K562 (cell line): ENCODE measurements at regions of chr4 and their contacts with region 1.

Region 1: GRCh38 chr4:183747931-183748670 is 89.0 kb downstream of the TRAPPC11 start:
- DNase-seq: no peak
- ATAC-seq: no peak
- H3K4me3 ChIP-seq: no peak overlapping the region
- H3K27ac ChIP-seq: no peak overlapping the region
- H3K4me1 ChIP-seq: no peaks in the 10 kb centered on the region
- H3K27me3 ChIP-seq: peaks cover 15 to 19% of the 10 kb centered on the region in 2 experiments
- CTCF ChIP-seq: no peak
- EP300 ChIP-seq: no peak
- POLR2A ChIP-seq: no peak
- RAD21 ChIP-seq: no peak

Region 2: DNA sequence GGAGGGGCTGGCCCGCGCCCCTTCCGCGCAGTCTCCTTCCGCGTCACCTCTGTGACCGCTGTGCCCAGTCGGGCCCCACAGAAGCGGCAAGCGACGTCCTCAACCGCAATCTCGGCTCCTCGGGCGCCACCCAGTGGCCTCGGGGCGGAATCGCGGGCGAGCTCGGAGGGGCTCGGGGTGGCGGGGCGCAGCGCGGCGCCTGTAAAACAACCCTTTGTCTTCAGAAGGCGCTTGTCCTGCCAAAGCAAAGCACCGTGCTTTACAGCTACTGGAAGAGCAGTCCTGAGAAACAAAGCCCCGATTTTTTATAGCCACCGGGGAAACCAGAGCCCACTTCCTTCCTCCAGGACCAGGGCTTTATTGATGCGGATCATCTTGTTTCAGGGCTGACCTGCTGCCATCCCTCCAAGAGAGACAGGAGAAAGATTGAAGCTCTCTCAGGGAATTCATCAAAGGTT is 340.9 kb before region 1 on chr4:
- CTCF ChIA-PET with region 1: no interaction called
- POLR2A ChIA-PET with region 1: no interaction called
- in situ Hi-C with region 1: no loop called
- intact Hi-C with region 1: no loop called
- DNase-seq: peak; percentile 78 to 88 (median 80)
- ATAC-seq: peak; percentile 98
- H3K4me3 ChIP-seq: peak overlapping the region; percentile 38
- H3K27ac ChIP-seq: no peak overlapping the region; the same call in 2 of the 3 replicates
- H3K4me1 ChIP-seq: peaks cover 7 to 8% of the 10 kb centered on the region in 2 experiments; a peak in 4 of 5 replicates
- H3K27me3 ChIP-seq: no peaks in the 10 kb centered on the region
- CTCF ChIP-seq: peak; percentile 86 to 92 (median 91)
- EP300 ChIP-seq: no peak; the same call in 1 of the 2 replicates
- POLR2A ChIP-seq: no peak
- RAD21 ChIP-seq: peak; percentile 78 to 85

Region 3: DNA sequence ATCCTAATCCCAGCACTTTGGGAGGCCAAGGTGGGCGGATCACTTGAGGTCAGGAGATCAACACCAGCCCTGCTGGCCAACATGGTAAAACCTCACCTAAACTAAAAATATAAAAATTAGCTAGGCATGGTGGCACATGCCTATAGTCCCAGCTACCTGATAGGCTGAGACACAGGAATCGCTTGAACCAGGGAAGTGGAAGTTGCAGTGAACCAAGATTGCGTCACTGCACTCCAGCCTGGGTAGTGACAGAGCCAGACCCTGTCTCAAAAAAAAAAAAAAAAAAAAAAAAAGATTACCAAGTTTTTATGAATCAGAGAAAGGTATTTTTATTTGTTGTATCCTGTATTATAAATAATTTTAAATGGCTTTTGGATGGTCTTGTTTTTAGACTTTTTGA is 73.9 kb before region 1 on chr4:
- CTCF ChIA-PET with region 1: no interaction called
- POLR2A ChIA-PET with region 1: no interaction called
- in situ Hi-C with region 1: loop called (anchors 5 kb)
- intact Hi-C with region 1: no loop called
- DNase-seq: no peak
- ATAC-seq: peak; percentile 53; the same call in 2 of the 3 replicates
- H3K4me3 ChIP-seq: no peak overlapping the region
- H3K27ac ChIP-seq: no peak overlapping the region
- H3K4me1 ChIP-seq: no peaks in the 10 kb centered on the region
- H3K27me3 ChIP-seq: no peaks in the 10 kb centered on the region
- CTCF ChIP-seq: no peak
- EP300 ChIP-seq: no peak
- POLR2A ChIP-seq: no peak
- RAD21 ChIP-seq: no peak

Region 4: GRCh38 chr4:183876268-183876934 is 128.3 kb after region 1 on chr4:
- CTCF ChIA-PET with region 1: no interaction called
- POLR2A ChIA-PET with region 1: no interaction called
- in situ Hi-C with region 1: no loop called
- intact Hi-C with region 1: no loop called
- DNase-seq: no peak
- ATAC-seq: no peak; the same call in 2 of the 3 replicates
- H3K4me3 ChIP-seq: no peak overlapping the region
- H3K27ac ChIP-seq: no peak overlapping the region
- H3K4me1 ChIP-seq: no peaks in the 10 kb centered on the region
- H3K27me3 ChIP-seq: peaks cover 21 to 43% of the 10 kb centered on the region in 2 experiments; a peak in 4 of 5 replicates
- CTCF ChIP-seq: no peak
- EP300 ChIP-seq: no peak
- POLR2A ChIP-seq: no peak
- RAD21 ChIP-seq: no peak